OCI-LY7 (cell line): ENCODE measurements at regions of chr17 and their contacts with region 1.

Region 1: DNA sequence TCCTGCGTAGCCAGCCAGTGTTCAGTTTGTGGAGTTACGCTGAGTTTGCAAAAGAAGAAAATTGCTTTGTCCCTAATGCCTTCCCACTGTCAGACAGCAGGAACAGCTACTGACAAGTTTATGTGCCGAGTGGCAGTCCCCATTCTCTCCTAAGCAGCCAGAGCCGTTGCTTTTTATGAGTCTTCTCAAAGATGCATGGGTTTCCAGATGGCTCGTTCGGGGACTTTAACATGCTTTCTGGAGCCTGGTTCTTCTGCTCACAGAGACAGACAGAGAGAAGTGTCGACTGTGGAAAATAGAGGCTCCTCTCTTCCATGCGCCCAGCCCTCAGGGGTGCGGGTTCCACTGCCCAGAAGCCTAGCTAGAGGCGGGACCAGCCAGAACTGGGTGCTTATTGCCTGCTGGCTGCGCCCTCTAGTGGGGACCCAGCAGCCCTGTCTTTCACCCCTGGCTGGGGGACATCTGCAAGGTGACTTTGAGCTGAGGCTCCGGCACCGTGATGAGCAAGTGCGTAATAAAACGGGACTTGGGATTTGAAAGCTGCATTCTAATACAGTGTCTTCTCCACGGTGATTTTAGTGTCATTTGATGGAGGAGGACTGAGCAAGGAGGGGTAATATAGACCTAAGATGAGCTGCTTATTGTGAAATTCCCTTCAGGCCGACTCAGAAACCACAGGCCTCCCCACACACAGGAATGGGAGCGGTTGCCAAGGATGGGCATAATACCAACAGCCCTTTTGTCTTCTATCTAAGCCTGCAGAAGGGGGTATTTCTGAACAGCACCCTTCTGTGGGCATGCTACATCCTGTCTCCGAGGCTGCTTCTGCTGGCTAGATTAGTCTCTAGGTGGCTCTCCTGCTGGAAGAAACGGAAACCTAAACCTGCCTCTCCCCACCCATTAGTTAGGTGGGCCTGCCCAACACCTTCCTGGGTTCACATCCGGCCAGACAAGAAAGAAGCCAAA is 73.1 kb downstream of the CCDC182 start:
- DNase-seq: peak; percentile 88
- H3K4me3 ChIP-seq: peak overlapping the region; percentile 5
- H3K27ac ChIP-seq: peak overlapping the region; percentile 57
- H3K4me1 ChIP-seq: peaks cover 26% of the 10 kb centered on the region
- CTCF ChIP-seq: peak; percentile 97

Region 2: GRCh38 chr17:57130761-57131461 is 541.0 kb before region 1 on chr17:
- CTCF ChIA-PET with region 1: no interaction called
- POLR2A ChIA-PET with region 1: no interaction called
- intact Hi-C with region 1: loop called (anchors 10 kb)
- DNase-seq: peak; percentile 86
- H3K4me3 ChIP-seq: peak overlapping the region; percentile 55
- H3K27ac ChIP-seq: no peak overlapping the region
- H3K4me1 ChIP-seq: peaks cover 15% of the 10 kb centered on the region
- CTCF ChIP-seq: peak; percentile 84

Region 3: DNA sequence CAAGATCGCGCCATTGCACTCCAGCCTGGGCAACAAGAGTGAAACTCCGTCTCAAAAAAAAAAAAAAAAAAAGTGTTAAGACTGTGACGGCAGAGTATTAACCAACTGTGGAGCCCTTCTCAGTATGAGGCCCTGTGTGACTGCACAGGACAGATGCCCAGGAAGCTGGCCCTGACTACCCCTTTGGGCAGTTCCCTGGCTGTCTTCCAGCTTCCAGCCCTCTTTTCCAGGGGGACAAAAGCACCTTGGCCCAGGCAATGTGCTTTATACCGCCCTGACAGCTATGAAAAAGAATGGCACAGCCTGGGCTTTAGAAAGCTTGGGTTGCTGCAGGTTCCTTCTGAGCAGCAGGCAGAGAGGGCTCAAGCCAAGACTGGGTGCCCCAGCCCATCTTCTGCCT is 525.7 kb before region 1 on chr17:
- CTCF ChIA-PET with region 1: no interaction called
- POLR2A ChIA-PET with region 1: no interaction called
- intact Hi-C with region 1: no loop called
- DNase-seq: no peak
- H3K4me3 ChIP-seq: no peak overlapping the region
- H3K27ac ChIP-seq: no peak overlapping the region
- H3K4me1 ChIP-seq: no peaks in the 10 kb centered on the region
- CTCF ChIP-seq: no peak

Region 4: GRCh38 chr17:57440522-57441485 is 231.1 kb before region 1 on chr17:
- CTCF ChIA-PET with region 1: interaction called, 3 read pairs
- POLR2A ChIA-PET with region 1: no interaction called
- intact Hi-C with region 1: loop called (anchors 5 kb)
- DNase-seq: peak; percentile 66
- H3K4me3 ChIP-seq: no peak overlapping the region
- H3K27ac ChIP-seq: peak overlapping the region; percentile 82
- H3K4me1 ChIP-seq: peaks cover 62% of the 10 kb centered on the region
- CTCF ChIP-seq: peak; percentile 78

Region 5: DNA sequence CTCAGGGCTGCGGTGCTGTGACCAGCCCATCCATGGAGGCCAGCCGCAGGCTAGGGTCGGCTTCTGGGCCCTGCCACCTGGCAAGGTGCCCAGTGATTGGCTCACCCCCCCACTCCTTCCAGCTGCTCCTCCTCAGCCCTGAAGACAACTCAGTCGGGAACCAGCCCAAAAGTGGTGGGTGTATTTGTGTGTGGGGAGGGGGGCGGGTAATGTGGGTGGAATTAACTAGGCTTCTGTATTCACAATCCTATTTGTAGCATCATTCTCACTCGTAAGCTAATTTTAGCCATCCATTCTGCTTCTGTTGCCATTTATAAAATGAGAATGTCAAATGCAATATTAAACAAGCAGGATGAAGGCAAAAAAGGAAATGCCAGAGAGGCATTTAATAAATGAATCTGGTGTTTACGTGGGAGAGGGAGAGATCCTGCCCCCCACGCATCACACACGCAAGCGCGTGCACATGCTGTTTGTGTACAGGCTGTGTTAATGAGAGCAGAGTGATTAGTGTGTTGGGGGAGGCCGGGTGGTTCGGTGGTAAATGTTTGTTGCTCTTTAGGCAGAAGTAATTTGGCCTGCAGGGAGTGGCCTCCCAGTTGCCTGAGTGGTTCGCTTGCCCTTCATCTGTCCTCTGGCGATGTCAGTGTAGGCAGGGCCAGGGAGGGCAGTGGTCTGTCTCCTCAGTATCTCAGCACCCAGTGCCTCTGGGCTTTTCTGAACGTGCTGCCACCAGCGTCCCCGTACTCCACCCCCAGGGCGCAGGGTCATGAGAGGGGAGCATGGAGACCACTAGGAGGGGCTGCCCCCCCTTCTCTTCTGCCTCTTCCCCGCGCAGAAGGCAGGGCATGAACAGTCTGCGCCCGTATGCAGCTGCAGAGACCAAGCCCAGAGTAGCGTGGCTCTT is 66.9 kb before region 1 on chr17:
- CTCF ChIA-PET with region 1: interaction called, 6 read pairs
- POLR2A ChIA-PET with region 1: interaction called, 6 read pairs
- intact Hi-C with region 1: loop called (anchors 1 kb)
- DNase-seq: peak; percentile 92
- H3K4me3 ChIP-seq: peak overlapping the region; percentile 4
- H3K27ac ChIP-seq: peak overlapping the region; percentile 89
- H3K4me1 ChIP-seq: peaks cover 73% of the 10 kb centered on the region
- CTCF ChIP-seq: peak; percentile 67

Region 6: DNA sequence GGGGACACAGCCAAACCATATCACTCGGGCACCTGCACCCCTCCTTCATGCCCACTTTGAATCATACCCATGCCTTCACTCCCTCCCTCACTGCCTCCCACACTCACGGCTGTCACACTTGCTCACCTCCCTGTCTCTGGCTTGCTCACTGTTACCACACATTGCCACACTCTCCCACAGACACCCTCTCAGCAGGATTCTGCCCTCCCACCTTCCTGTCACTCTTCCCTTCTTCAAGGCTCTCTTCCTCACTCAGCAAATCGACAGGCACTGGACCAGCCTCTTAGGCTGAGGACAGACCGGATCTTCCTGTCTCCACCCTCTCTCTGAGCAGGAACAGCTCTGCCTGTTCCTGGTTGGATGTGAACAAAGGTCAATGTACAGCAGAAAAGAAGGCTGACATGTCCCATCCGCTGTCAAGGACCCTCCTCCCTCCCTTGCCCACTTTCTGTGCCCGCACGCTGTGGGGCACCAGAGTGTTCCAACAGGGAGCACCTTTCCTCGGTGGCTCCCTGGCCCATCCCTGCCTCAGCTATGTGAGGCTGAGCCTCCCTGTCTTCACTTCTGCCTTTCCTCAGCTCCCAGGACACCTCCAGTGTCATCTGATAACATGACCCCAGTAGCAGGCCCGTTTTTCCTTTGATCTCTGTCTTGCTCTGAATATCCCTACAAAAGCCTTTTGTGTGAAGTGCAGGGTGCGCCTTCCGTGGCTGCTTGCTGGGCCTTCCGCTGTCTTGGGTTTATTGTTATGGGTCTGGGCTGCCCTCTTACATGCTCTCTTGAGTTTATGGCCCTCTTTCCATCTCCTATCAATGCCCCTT is 26.2 kb after region 1 on chr17:
- CTCF ChIA-PET with region 1: no interaction called
- POLR2A ChIA-PET with region 1: no interaction called
- intact Hi-C with region 1: no loop called
- DNase-seq: no peak
- H3K4me3 ChIP-seq: no peak overlapping the region
- H3K27ac ChIP-seq: no peak overlapping the region
- H3K4me1 ChIP-seq: peaks cover 7% of the 10 kb centered on the region
- CTCF ChIP-seq: no peak

Region 7: DNA sequence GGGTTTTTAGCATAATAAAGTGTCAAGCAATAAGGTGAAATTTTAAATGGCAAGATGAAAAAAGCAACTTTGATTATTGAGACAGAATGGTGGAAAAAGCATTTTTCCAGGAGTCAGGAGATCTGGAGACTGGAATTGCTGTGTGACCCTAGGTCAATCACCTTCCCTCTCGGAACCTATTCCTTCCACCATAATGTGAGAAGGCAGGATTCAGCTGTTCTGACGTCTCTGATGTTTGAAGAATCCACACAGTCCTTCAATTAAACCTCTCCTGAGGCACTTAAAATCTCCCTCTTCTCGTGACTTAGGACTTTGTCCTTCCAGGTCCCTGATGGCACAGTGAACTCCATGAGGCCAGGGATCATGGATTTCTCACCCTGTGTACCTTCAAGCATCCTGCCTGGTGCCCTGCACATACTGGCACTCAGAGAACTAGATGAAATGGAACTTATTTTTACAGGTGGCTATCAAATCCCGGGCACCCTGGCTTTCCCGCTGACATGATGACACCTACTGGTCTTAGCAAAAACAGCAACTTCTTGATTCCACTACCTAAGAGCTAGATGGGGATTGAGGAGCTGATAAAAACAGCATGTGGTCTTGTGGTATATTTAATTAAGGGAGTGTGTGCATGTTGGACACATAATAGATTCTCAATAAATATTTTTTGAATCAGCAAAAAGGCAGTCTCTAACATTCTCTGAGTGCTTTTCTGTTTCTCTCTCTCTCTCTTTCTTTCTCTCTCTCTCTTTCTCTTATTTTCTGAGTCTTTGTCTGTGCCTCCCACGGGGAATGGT is 75.5 kb after region 1 on chr17:
- CTCF ChIA-PET with region 1: no interaction called
- POLR2A ChIA-PET with region 1: no interaction called
- intact Hi-C with region 1: loop called (anchors 2 kb)
- DNase-seq: peak; percentile 83
- H3K4me3 ChIP-seq: no peak overlapping the region
- H3K27ac ChIP-seq: no peak overlapping the region
- H3K4me1 ChIP-seq: peaks cover 24% of the 10 kb centered on the region
- CTCF ChIP-seq: peak; percentile 97